HAP-1 (cell line): ENCODE measurements at regions of chr1 and their contacts with region 1.

Region 1: DNA sequence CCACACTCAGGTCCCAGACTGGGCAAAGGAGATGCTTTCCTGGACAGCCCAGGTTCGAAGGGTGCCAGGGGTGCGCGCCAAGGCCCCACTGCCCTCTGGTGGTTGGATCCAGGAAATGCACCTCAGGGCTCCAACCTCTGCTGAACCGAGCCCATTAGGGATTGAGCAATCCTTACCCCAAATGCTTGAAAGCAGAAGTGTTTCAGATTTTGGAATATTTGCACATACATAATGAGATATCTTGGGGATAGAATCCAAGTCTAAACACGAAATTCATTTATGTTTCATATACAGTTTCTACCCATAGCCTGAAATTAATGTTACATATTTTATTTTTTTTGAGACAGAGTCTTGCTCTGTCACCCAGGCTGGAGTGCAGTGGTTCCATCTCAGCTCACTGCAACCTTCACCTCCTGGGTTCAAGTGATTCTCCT is 57.4 kb downstream of the SLC9A1 start:
- DNase-seq: peak; percentile 40 to 85
- H3K4me3 ChIP-seq: no peak overlapping the region
- H3K4me1 ChIP-seq: peaks cover 3% of the 10 kb centered on the region; the same call in 1 of the 2 replicates
- H3K27me3 ChIP-seq: no peaks in the 10 kb centered on the region

Region 2: GRCh38 chr1:27044613-27045151 is 52.8 kb before region 1 on chr1:
- in situ Hi-C with region 1: loop called (anchors 5 kb)
- DNase-seq: peak; percentile 73 to 95
- H3K4me3 ChIP-seq: no peak overlapping the region
- H3K4me1 ChIP-seq: peaks cover 10% of the 10 kb centered on the region; the same call in 1 of the 2 replicates
- H3K27me3 ChIP-seq: no peaks in the 10 kb centered on the region